CD4-positive, alpha-beta memory T cell (primary cell): ENCODE measurements at regions of chr12 and their contacts with region 1.

Region 1: DNA sequence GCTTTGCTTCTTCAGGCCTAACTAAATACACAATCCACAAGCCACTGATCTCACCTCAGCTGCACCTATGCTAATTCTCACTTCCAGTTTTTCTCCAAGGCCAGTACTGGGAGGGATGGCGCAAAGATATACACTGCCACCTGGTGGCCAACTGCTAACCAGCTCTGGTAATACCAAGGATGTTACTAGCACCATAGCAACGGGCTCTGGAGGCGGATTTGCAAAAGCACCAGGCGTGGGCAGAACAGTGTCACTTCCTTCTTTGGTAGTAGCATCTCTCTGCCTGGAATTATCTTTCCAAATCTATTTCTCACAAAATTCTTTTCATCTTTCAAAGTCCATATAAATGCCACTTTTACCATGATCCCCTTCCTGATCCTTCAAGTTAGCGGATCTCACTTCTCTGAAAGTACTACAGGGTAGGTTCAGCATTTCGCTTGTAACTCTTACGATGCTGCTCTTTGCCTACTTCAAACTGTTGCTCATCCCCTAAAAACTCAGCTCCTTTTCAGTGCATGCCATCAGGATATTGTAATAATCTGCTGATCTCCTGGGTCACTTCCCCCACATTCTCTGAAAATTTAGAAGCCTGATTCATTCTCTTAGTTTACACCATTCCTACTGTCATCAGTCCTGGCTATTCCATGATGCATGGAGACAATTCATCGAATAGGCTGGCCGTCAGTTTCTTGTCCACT is 37.1 kb upstream of the FOXJ2 start:
- DNase-seq: peak; percentile 81 to 90 (median 86)
- H3K4me3 ChIP-seq: no peak overlapping the region
- H3K4me3 Mint-ChIP-seq: no peak overlapping the region
- H3K27ac ChIP-seq: peak overlapping the region; percentile 1
- H3K27ac Mint-ChIP-seq: no peak overlapping the region
- H3K4me1 ChIP-seq: peaks cover 27% of the 10 kb centered on the region
- H3K4me1 Mint-ChIP-seq: peaks cover 9 to 14% (median 12%) of the 10 kb centered on the region in 4 donors
- H3K27me3 ChIP-seq: no peaks in the 10 kb centered on the region
- H3K27me3 Mint-ChIP-seq: no peaks in the 10 kb centered on the region

Region 2: DNA sequence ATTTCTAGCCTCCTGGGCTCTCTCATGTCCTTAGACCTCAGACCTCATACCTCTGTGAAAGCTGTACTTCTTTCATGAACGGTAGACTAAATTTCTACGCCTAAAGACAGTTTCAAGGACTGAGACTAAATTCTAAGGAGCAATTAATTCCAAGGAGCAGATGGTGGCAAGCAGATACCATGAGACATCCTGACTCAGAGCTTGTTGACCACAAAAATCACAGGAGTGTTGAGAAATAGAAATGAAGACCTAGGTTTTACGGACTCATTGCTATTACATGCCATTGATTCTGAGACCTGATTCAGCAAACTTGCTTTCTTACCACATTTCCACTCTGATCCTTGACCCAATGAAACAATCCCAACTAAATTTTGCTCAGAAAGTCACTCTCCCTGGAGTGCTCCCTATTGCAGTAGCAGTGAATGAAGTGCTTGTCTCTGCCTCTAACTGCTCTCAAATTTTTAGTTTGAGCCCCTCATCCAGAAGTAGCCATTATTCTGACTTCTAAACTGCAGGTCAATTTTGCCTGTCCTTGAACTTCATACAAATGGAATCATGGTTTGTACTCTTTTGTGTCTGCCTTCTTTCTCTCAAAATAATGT is 753.9 kb before region 1 on chr12:
- CTCF ChIA-PET with region 1: no interaction called
- POLR2A ChIA-PET with region 1: no interaction called
- intact Hi-C with region 1: no loop called
- DNase-seq: no peak
- H3K4me3 ChIP-seq: no peak overlapping the region
- H3K4me3 Mint-ChIP-seq: no peak overlapping the region
- H3K27ac ChIP-seq: no peak overlapping the region
- H3K27ac Mint-ChIP-seq: no peak overlapping the region
- H3K4me1 ChIP-seq: no peaks in the 10 kb centered on the region
- H3K4me1 Mint-ChIP-seq: no peaks in the 10 kb centered on the region
- H3K27me3 ChIP-seq: no peaks in the 10 kb centered on the region
- H3K27me3 Mint-ChIP-seq: peaks cover 10 to 13% of the 10 kb centered on the region in 2 donors

Region 3: GRCh38 chr12:7859552-7859951 is 135.9 kb before region 1 on chr12:
- CTCF ChIA-PET with region 1: interaction called, 37 read pairs
- POLR2A ChIA-PET with region 1: no interaction called
- intact Hi-C with region 1: loop called (anchors 1 kb)
- DNase-seq: no peak
- H3K4me3 ChIP-seq: no peak overlapping the region
- H3K4me3 Mint-ChIP-seq: no peak overlapping the region
- H3K27ac ChIP-seq: no peak overlapping the region
- H3K27ac Mint-ChIP-seq: peak overlapping the region in 4 of 7 donors; percentile 5 to 47 (median 30)
- H3K4me1 ChIP-seq: no peaks in the 10 kb centered on the region
- H3K4me1 Mint-ChIP-seq: peaks cover 6 to 13% (median 9%) of the 10 kb centered on the region in 4 donors
- H3K27me3 ChIP-seq: no peaks in the 10 kb centered on the region
- H3K27me3 Mint-ChIP-seq: peaks cover 1 to 4% of the 10 kb centered on the region in 2 donors

Region 4: GRCh38 chr12:7970475-7971252 is 24.8 kb before region 1 on chr12:
- CTCF ChIA-PET with region 1: interaction called, 14 read pairs
- POLR2A ChIA-PET with region 1: interaction called, 35 read pairs
- intact Hi-C with region 1: loop called (anchors 1 kb)
- DNase-seq: peak; percentile 83 to 90 (median 86)
- H3K4me3 ChIP-seq: peak overlapping the region; percentile 70 to 83
- H3K4me3 Mint-ChIP-seq: peak overlapping the region; percentile 82 to 95 (median 90)
- H3K27ac ChIP-seq: peak overlapping the region; percentile 93
- H3K27ac Mint-ChIP-seq: peak overlapping the region; percentile 92 to 100 (median 98)
- H3K4me1 ChIP-seq: peaks cover 34% of the 10 kb centered on the region
- H3K4me1 Mint-ChIP-seq: peaks cover 15 to 29% (median 24%) of the 10 kb centered on the region in 4 donors
- H3K27me3 ChIP-seq: no peaks in the 10 kb centered on the region
- H3K27me3 Mint-ChIP-seq: peaks cover 0 to 3% of the 10 kb centered on the region in 2 donors

Region 5: DNA sequence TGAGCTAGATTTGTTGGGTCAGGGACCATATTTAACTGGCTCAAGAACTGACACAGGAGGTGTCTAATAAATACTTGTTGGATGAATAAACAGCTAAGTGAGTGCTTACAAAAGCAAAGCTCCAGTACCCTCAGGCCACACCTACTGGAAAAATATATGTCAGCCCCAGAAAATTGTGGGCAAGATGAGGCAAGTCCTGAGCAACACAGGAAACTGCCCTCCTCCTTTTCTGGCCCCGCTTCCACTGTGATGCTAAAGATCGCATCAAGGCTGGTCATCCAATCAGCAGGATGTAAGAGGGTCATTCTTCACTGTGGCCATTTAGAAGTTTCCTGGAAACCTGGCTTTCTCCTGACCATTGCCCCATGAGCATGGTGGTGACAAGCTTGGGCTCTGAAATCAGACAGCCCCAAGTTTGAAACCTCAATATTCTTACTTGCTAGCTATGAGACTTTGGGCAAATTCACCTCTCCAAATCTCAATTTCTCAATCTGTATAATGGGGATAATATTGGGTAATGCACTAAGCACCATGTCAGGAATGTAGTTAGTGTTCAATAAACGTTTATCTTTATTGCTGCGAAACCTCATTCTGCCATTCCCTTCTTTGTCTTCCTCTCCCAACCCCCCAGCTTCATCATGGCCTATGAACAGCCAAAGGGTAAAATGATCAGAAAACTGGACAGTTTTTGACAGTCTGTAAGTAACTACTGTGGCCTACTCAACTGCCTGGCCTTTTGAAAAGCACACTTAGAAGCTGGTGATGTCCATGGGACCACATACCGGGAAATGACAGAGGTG is 1352.1 kb after region 1 on chr12:
- CTCF ChIA-PET with region 1: no interaction called
- POLR2A ChIA-PET with region 1: no interaction called
- intact Hi-C with region 1: no loop called
- DNase-seq: no peak
- H3K4me3 ChIP-seq: no peak overlapping the region
- H3K4me3 Mint-ChIP-seq: no peak overlapping the region
- H3K27ac ChIP-seq: no peak overlapping the region
- H3K27ac Mint-ChIP-seq: no peak overlapping the region
- H3K4me1 ChIP-seq: no peaks in the 10 kb centered on the region
- H3K4me1 Mint-ChIP-seq: peaks cover 7 to 15% (median 13%) of the 10 kb centered on the region in 4 donors
- H3K27me3 ChIP-seq: no peaks in the 10 kb centered on the region
- H3K27me3 Mint-ChIP-seq: no peaks in the 10 kb centered on the region